ENCODE measurements at regions of chr2 and their contacts with region 1.

Region 1: DNA sequence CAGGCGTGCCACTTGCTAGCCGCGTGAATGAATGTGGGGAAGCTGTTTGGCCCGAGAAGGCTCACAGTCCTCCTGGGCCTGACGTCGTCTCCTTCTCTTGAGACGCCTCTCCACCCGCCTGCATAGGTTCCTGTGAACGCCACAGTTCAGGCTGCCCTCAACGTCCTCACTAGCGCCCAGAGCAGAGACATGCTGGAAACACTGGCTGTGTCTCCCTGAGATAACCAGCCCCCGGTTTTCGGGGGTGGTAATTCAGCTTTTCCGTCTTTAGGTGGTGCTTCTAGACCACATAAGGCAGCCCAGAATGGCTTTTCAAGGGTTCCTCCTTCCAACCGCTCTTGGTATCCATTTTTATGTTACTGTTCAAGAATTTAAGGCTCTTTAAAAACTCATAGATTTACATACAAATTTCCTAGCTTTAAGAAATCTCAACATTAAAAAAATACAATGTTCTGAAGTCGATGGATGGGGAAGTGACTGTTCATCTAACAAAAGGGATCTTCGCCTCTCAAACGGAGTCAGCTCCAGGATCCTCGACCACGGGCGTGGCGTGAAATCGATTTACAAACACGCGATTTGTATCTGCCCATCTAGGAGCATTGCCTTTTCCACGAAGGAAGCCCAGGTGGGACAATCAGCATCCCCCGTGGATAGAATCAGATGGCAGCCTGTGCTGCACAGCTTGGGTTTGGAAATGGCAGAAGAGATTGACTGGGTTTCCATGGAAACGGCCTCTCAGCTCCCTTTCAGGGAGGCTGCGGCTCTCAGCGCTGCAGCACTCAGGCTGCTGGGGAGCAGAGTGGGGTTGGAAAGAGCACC is 110.6 kb upstream of the PXDN start:
- DNase-seq: no peak
- H3K4me3 ChIP-seq: peak overlapping the region in 1 of 2 donors; percentile 6
- H3K27ac ChIP-seq: no peak overlapping the region
- H3K4me1 ChIP-seq: peaks cover 0 to 9% (median 0%) of the 10 kb centered on the region in 4 donors
- H3K27me3 ChIP-seq: peaks cover 0 to 23% of the 10 kb centered on the region in 2 donors
- CTCF ChIP-seq: peak; percentile 53 to 71

Region 2: DNA sequence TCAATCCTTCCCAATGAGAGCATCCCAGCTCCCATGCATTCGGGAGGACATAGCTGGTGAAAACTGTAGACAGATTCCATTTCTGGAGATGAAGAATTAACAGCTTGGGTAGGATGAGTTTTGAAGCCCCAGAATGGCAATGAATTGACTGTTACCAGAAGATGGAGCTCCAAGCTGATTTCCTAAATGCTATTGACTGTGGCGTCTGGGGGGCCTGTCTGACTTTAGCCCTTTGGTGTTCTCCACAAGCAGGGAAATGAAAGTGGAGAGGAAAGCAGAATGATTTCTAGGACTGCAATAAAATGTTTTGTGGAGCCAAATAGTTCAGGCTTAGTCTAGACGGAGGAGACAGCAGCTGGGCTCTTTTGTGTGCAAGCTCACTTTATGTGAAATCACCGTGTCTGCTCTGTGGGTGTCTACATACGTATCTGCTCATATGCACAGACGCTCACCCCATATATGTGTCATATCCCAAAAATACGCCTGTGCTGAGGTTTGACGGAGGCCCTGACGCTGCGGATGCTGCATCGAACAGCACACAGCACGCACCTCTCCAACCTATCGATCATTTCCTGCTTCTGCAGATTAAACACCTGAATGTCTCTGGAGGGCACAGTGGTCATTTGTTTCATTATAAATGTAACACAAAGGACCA is 55.8 kb after region 1 on chr2:
- intact Hi-C with region 1: no loop called
- DNase-seq: no peak
- H3K4me3 ChIP-seq: no peak overlapping the region
- H3K27ac ChIP-seq: no peak overlapping the region
- H3K4me1 ChIP-seq: no peaks in the 10 kb centered on the region
- H3K27me3 ChIP-seq: peaks cover 0 to 36% of the 10 kb centered on the region in 2 donors
- CTCF ChIP-seq: no peak

Region 3: DNA sequence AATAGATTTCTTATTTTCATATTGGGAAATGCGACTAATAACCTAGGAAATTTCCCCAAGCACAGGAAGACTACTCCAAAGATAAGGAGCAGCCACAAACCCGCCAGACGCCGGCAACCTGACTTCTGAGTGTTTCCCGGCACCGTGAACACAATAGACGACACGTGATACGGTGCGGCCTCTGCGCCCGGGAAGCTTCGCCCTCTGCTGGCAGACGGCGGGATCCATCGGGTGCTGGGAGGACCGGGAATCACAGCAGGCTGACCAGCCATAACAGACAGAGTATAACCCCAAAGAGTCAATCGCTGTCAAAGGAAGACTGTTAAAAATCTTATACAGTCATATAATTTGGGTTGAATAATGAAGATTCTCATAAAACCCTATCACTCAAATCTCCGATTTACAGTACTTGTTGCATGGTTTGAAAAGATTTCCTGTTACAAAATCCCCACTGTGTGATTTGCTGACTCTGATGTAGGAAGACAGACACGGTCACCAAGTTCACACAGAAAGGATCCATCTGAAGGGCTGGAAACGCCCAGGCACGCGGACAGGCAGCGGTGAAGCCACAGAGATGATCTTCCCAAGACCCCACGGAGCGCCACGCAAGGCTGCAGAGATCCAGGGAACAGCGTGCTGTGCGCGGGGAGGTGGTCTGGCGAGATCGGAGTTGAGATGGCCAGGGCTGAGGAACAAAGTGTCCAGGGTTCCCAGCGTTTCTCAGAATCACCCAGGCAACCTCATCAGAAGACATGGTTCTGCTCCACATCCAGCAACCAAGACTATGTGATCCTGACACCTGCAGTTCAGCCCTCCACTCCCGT is 1448.9 kb after region 1 on chr2:
- intact Hi-C with region 1: loop called (anchors 5 kb)
- DNase-seq: peak; percentile 83 to 84
- H3K4me3 ChIP-seq: peak overlapping the region in 1 of 2 donors; percentile 38
- H3K27ac ChIP-seq: no peak overlapping the region
- H3K4me1 ChIP-seq: peaks cover 0 to 7% (median 3%) of the 10 kb centered on the region in 4 donors
- H3K27me3 ChIP-seq: no peaks in the 10 kb centered on the region
- CTCF ChIP-seq: peak; percentile 73 to 88

Region 4: DNA sequence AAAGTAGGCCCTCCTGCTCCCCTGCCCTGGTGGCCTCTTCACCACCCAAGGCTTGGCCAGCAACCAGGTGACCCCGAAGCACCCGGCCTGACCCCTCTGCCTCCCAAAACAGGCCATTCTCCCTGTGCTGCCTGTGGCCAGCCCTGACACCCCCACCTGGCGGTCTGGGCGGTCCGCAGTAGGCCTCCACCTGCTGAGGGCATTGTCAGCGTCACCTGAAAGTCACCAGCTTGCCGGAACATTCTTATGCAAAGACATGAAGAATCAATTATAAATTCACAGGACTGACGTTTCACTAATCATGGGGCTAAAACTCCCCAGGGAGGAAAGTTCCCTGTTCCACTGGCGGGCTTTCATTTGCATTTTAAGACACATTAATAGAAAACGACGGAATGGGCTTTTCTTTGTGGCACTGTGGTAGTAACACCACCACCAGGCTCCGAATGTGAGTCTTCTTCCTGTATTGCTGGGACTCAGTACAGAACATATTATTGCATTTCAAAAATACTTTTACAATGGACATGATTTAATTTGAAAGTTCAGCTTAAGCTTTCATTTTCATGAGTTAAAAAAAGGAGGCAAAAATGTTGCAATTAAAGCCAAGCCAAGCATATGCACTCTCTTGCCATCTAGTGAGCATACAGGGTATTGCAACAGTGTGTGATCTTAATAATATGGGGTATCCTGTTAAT is 1607.0 kb after region 1 on chr2:
- intact Hi-C with region 1: loop called (anchors 10 kb)
- DNase-seq: peak in 1 of 2 donors; percentile 65
- H3K4me3 ChIP-seq: no peak overlapping the region
- H3K27ac ChIP-seq: peak overlapping the region; percentile 52 to 73
- H3K4me1 ChIP-seq: peaks cover 0 to 24% (median 10%) of the 10 kb centered on the region in 4 donors
- H3K27me3 ChIP-seq: no peaks in the 10 kb centered on the region
- CTCF ChIP-seq: peak; percentile 83 to 98

Measured in tibial artery (tissue), 4 donors.